Uterus (tissue), 4 donors: ENCODE measurements at regions of chr14 and their contacts with region 1.

Region 1: GRCh38 chr14:102086972-102087761 is at the start of gene HSP90AA1:
- DNase-seq: peak; percentile 93 to 95
- H3K4me3 ChIP-seq: peak within 1 kb of the TSS; percentile 64 to 96
- H3K27ac ChIP-seq: peak within 1 kb of the TSS; percentile 98 to 100
- H3K4me1 ChIP-seq: peaks cover 17 to 19% of the 10 kb centered on the region in 2 donors
- H3K27me3 ChIP-seq: no peaks in the 10 kb centered on the region
- CTCF ChIP-seq: peak in 3 of 4 experiments; percentile 19 to 30 (median 22)
- POLR2A ChIP-seq: peak; percentile 93 to 97
- total RNA-seq, gene HSP90AA1: 208 to 800 (median 247) TPM

Region 2: GRCh38 chr14:101761032-101761880 is 325.9 kb before region 1 on chr14 and contains the start of gene PPP2R5C:
- intact Hi-C with region 1: loop called (anchors 5 kb)
- DNase-seq: peak; percentile 89 to 94
- H3K4me3 ChIP-seq: peak within 1 kb of the TSS; percentile 81 to 98
- H3K27ac ChIP-seq: peak within 1 kb of the TSS; percentile 87 to 93
- H3K4me1 ChIP-seq: no peaks in the 10 kb centered on the region
- H3K27me3 ChIP-seq: no peaks in the 10 kb centered on the region
- CTCF ChIP-seq: no peak
- POLR2A ChIP-seq: peak; percentile 58 to 78
- total RNA-seq, gene PPP2R5C: 143 to 171 (median 169) TPM

Region 3: DNA sequence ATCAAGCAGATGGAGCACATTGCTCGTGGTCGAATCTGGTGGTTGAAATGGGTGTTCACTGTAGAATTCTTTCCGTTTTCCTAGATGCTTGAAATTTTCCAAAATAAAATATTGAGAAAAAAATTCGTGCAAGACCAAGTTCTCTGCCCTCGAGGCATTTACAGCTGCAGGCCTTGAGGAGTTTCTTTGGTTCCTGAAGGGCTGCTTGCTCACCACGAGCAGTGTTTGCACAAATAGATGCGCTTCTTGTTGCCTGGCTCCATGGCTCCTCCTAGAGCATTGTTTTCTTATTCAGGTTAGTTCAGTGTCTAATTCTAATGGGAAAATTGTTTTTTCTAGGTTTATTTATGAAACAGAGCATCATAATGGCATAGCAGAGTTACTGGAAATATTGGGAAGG is 197.3 kb before region 1 on chr14:
- intact Hi-C with region 1: no loop called
- DNase-seq: no peak
- H3K4me3 ChIP-seq: no peak overlapping the region
- H3K27ac ChIP-seq: no peak overlapping the region
- H3K4me1 ChIP-seq: no peaks in the 10 kb centered on the region
- H3K27me3 ChIP-seq: no peaks in the 10 kb centered on the region
- CTCF ChIP-seq: peak in 1 of 4 experiments; percentile 20
- POLR2A ChIP-seq: no peak

Region 4: GRCh38 chr14:101964297-101965144 is 122.6 kb before region 1 on chr14 and contains the start of gene DYNC1H1:
- intact Hi-C with region 1: loop called (anchors 5 kb)
- DNase-seq: peak; percentile 96 to 97
- H3K4me3 ChIP-seq: peak within 1 kb of the TSS; percentile 74 to 78
- H3K27ac ChIP-seq: peak within 1 kb of the TSS; percentile 90
- H3K4me1 ChIP-seq: peaks cover 0 to 7% of the 10 kb centered on the region in 2 donors
- H3K27me3 ChIP-seq: no peaks in the 10 kb centered on the region
- CTCF ChIP-seq: no peak
- POLR2A ChIP-seq: peak; percentile 99 to 100
- total RNA-seq, gene DYNC1H1: 251 to 634 (median 479) TPM

Region 5: DNA sequence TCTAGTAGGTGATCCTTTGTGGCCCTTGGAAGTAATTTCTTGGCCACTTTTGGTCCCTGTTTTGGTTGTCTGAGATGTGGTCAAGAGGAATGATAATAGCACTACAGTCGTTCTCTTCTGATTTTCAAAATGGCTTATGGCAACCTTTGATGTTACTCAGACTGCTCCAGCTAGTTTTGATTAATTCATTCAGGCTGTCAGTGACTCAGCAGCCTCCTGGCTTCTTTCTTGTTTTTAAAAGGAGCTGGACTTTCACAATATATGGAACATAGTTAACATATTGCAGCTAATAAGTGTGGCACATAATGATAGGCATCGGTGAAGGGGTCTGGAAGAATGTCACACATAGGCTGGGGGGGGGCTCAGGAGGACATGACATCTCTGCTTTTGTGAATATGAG is 99.9 kb after region 1 on chr14:
- intact Hi-C with region 1: no loop called
- DNase-seq: peak in 1 of 2 donors; percentile 49
- H3K4me3 ChIP-seq: no peak overlapping the region
- H3K27ac ChIP-seq: peak overlapping the region; percentile 61 to 65
- H3K4me1 ChIP-seq: peaks cover 0 to 11% of the 10 kb centered on the region in 2 donors
- H3K27me3 ChIP-seq: no peaks in the 10 kb centered on the region
- CTCF ChIP-seq: no peak
- POLR2A ChIP-seq: no peak